CD4-positive, alpha-beta T cell (primary cell): ENCODE measurements at regions of chr1 and their contacts with region 1.

Region 1: GRCh38 chr1:222844189-222844779 is 29.4 kb downstream of the DISP1 start:
- DNase-seq: no peak
- ATAC-seq: no peak
- H3K4me3 ChIP-seq: no peak overlapping the region
- H3K4me3 Mint-ChIP-seq: no peak overlapping the region
- H3K27ac ChIP-seq: no peak overlapping the region
- H3K27ac Mint-ChIP-seq: no peak overlapping the region
- H3K4me1 ChIP-seq: no peaks in the 10 kb centered on the region
- H3K4me1 Mint-ChIP-seq: no peaks in the 10 kb centered on the region
- H3K27me3 ChIP-seq: no peaks in the 10 kb centered on the region
- H3K27me3 Mint-ChIP-seq: no peaks in the 10 kb centered on the region
- CTCF ChIP-seq: no peak

Region 2: DNA sequence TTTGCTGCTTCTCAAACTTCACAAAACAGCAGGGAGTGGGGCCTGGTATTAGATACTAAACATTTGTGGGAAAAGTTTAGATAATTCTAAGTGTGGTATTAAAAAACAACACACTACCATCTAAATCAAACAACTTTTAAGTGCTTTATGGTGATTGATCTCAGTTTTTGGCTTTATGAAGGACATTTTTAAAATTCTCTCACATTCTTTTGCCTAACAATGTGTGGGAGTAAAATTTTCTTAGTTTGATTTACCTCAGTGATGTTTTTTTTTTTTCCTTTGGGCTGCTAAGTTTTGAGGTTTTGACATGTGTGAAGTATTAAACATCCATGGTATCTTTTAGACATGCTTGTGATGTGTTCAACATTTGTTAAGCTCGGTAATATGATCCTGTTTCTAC is 86.7 kb after region 1 on chr1:
- CTCF ChIA-PET with region 1: no interaction called
- POLR2A ChIA-PET with region 1: no interaction called
- intact Hi-C with region 1: loop called in 1 of 2 experiments (anchors 10 kb)
- DNase-seq: no peak
- ATAC-seq: no peak
- H3K4me3 ChIP-seq: no peak overlapping the region
- H3K4me3 Mint-ChIP-seq: no peak overlapping the region
- H3K27ac ChIP-seq: no peak overlapping the region
- H3K27ac Mint-ChIP-seq: no peak overlapping the region
- H3K4me1 ChIP-seq: no peaks in the 10 kb centered on the region
- H3K4me1 Mint-ChIP-seq: no peaks in the 10 kb centered on the region
- H3K27me3 ChIP-seq: no peaks in the 10 kb centered on the region
- H3K27me3 Mint-ChIP-seq: no peaks in the 10 kb centered on the region
- CTCF ChIP-seq: no peak

Region 3: DNA sequence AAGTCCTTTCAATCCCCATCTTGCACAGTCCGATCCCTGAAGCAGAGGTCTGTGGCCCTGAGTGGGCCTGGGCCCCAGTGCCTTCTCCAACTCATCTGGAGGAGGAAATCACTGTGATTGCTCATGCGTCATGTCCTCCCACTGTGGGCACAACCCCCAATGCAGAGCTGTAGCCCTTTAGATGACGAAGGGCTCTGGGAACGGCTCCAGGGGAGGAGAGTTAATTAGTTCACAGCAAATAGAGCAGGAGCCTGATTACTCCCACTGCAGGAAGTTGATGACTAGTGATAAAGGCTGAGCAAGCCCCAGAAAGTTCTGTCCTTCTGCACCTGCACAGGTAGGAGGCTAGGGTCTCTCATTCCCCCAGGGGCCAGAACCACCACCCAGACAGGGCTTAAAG is 660.5 kb after region 1 on chr1:
- CTCF ChIA-PET with region 1: no interaction called
- POLR2A ChIA-PET with region 1: no interaction called
- intact Hi-C with region 1: no loop called
- DNase-seq: no peak
- ATAC-seq: no peak
- H3K4me3 ChIP-seq: no peak overlapping the region
- H3K4me3 Mint-ChIP-seq: no peak overlapping the region
- H3K27ac ChIP-seq: no peak overlapping the region
- H3K27ac Mint-ChIP-seq: no peak overlapping the region
- H3K4me1 ChIP-seq: peaks cover 6% of the 10 kb centered on the region
- H3K4me1 Mint-ChIP-seq: peaks cover 13% of the 10 kb centered on the region
- H3K27me3 ChIP-seq: no peaks in the 10 kb centered on the region
- H3K27me3 Mint-ChIP-seq: no peaks in the 10 kb centered on the region
- CTCF ChIP-seq: no peak